Heart right ventricle (tissue), 16 donors: ENCODE measurements at regions of chr4 and their contacts with region 1.

Region 1: DNA sequence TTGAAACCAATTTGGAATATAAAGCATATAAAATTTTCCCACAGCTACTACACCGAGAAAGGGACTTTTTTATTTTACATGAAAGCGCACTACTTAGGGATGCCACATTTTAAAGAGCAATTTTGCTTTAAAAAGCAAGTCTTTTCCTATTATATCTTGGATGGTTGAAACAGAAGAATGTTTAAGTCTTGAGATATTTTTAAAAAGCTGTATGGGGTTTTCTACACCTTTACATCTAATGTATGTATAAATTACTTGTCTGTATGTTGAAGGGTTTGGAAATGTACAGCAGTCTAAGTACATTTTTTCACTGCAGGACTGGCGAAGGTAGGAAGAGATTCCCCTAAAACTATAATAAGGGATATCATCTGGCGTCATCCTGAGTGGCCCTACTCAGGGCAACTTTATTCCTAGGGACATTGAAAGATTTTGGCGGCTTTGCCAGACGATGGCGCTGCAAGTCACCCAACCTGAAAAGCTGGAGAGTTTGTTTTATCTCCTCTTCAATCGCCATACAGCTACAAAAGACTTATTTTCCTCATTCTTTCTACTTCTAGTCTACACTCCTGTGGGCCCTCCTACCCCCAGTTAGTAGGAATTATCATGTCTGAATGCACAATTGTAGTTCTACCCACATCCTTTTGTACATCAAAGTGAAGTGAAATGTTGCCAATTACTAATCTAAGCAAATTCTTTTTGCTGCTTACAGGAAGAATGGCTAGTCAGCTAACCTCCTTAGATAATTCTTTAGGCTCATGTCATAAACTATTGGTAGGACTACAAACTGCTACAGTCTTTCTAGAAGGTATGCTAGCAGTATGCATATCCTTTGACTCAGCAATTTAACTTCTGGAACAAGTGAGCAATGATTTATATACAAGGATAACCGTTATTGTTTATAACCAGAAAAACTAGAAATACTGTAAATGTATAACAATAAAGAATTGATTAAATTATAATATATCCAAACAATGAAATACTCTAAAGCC is 782 bp upstream of the NEK1 start:
- DNase-seq: peak; percentile 66 to 74
- ATAC-seq: peak; percentile 51 to 78 (median 69)
- H3K4me3 ChIP-seq: peak overlapping the region; percentile 16 to 90 (median 76)
- H3K27ac ChIP-seq: peak overlapping the region in 9 of 10 donors; percentile 93 to 97 (median 95)
- H3K4me1 ChIP-seq: peaks cover 0 to 29% (median 23%) of the 10 kb centered on the region in 9 donors
- H3K27me3 ChIP-seq: no peaks in the 10 kb centered on the region
- CTCF ChIP-seq: peak; percentile 37 to 84 (median 69)

Region 2: DNA sequence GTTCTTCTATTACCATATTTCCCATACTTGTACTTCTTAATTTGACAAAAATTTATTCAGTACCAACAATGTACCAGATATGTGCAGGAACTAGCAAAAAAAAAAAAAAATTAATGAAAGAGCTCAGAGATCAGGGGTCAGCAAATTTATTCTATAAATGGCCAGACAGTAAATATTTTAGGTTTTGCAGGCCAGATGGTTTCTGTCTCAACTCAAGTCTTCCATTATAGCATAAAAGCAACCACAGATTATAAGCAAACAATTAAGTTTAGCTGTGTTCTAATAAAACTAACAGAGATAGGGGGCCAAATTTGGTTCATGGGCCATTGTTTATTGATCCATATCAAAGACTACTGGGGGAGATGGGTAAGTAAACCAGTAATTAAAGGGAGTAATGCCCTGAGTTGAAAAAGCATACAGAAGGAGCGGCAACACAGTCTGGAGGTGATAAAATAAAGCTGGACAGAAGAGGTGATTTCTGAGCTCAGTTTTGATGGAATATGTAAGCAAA is 20.1 kb before region 1 on chr4:
- intact Hi-C with region 1: no loop called
- DNase-seq: no peak
- ATAC-seq: no peak
- H3K4me3 ChIP-seq: no peak overlapping the region
- H3K27ac ChIP-seq: no peak overlapping the region
- H3K4me1 ChIP-seq: peaks cover 0 to 14% (median 9%) of the 10 kb centered on the region in 9 donors
- H3K27me3 ChIP-seq: no peaks in the 10 kb centered on the region
- CTCF ChIP-seq: no peak

Region 3: GRCh38 chr4:169634975-169635374 is 21.8 kb after region 1 on chr4:
- intact Hi-C with region 1: no loop called
- DNase-seq: no peak
- ATAC-seq: no peak
- H3K4me3 ChIP-seq: no peak overlapping the region
- H3K27ac ChIP-seq: no peak overlapping the region
- H3K4me1 ChIP-seq: peaks cover 0 to 18% (median 7%) of the 10 kb centered on the region in 9 donors
- H3K27me3 ChIP-seq: no peaks in the 10 kb centered on the region
- CTCF ChIP-seq: no peak

Region 4: GRCh38 chr4:169675825-169676224 is 62.7 kb after region 1 on chr4:
- intact Hi-C with region 1: loop called in 1 of 10 experiments (anchors 5 kb)
- DNase-seq: no peak
- ATAC-seq: no peak
- H3K4me3 ChIP-seq: no peak overlapping the region
- H3K27ac ChIP-seq: no peak overlapping the region
- H3K4me1 ChIP-seq: peaks cover 0 to 30% (median 0%) of the 10 kb centered on the region in 9 donors
- H3K27me3 ChIP-seq: no peaks in the 10 kb centered on the region
- CTCF ChIP-seq: no peak

Region 5: GRCh38 chr4:169707958-169708643 is 94.9 kb after region 1 on chr4:
- intact Hi-C with region 1: loop called in 4 of 10 experiments (anchors 5 to 10 kb)
- DNase-seq: no peak
- ATAC-seq: peak in 5 of 8 donors; percentile 25 to 77 (median 55)
- H3K4me3 ChIP-seq: no peak overlapping the region
- H3K27ac ChIP-seq: peak overlapping the region in 6 of 10 donors; percentile 4 to 54 (median 16)
- H3K4me1 ChIP-seq: peaks cover 0 to 13% (median 9%) of the 10 kb centered on the region in 9 donors
- H3K27me3 ChIP-seq: no peaks in the 10 kb centered on the region
- CTCF ChIP-seq: no peak

Region 6: DNA sequence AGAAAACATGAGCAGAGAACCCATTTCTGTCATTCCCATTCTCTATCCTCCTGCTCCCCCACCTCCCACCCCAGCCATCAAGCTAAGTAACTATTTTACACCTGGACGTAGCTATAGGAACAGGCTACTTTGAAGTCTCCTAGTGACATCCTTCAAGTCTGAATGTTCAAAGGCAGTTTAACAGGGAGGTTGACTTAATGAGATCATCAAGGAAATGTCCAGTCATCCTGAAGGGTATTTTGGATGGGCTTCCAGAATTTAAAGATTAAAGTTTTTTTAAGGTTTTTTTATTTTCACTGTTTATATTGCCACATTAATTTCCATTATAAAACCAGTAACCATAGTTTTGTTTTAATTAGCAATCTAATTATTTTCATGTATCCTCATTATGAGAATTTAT is 103.5 kb after region 1 on chr4:
- intact Hi-C with region 1: loop called in 5 of 10 experiments (anchors 5 to 10 kb)
- DNase-seq: no peak
- ATAC-seq: no peak
- H3K4me3 ChIP-seq: no peak overlapping the region
- H3K27ac ChIP-seq: no peak overlapping the region
- H3K4me1 ChIP-seq: no peaks in the 10 kb centered on the region
- H3K27me3 ChIP-seq: no peaks in the 10 kb centered on the region
- CTCF ChIP-seq: no peak

Region 7: DNA sequence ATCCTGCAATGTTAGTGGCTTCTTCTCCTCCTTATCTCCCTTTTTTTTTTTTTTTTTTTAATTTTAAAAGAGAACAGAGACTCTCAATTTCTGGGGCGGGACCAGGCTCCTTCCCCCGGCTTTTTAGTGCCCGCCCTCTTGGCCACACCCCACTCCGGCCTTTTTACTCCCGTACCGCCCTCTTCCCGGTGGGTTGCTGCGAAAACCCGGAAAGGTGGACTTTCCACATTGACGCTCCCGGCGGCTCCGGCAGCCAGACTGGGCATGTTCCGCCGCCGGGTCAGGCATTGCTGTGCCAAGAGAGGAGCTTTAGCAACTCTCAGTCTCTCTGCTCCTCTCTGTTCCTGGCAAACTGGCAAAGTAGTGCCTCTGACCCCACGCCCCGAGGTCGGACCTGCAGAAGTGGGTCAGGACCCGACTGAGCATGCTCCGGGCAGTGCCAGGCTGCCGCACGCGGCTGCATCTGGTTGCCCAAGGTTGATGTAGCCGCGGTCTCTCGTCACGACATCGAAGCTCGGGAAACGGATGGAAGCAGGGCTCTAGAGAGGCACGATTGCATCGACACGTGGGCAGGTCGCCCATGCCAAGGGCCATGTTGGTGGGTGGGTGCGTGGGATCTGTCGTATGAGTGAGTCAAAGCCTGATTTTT is 414.1 kb after region 1 on chr4:
- intact Hi-C with region 1: loop called in 8 of 10 experiments (anchors 1 to 10 kb)
- DNase-seq: peak; percentile 93 to 98
- ATAC-seq: peak; percentile 87 to 99 (median 96)
- H3K4me3 ChIP-seq: peak overlapping the region; percentile 50 to 99 (median 88)
- H3K27ac ChIP-seq: peak overlapping the region in 8 of 10 donors; percentile 34 to 93 (median 88)
- H3K4me1 ChIP-seq: peaks cover 0 to 20% (median 12%) of the 10 kb centered on the region in 9 donors
- H3K27me3 ChIP-seq: peaks cover 0 to 36% (median 0%) of the 10 kb centered on the region in 7 donors
- CTCF ChIP-seq: no peak